ENCODE measurements at regions of chr21 and their contacts with region 1.

Region 1: GRCh38 chr21:39313571-39314142 is at the start of gene BRWD1:
- DNase-seq: peak; percentile 75
- H3K4me3 Mint-ChIP-seq: peak within 1 kb of the TSS; percentile 93
- H3K27ac Mint-ChIP-seq: peak within 1 kb of the TSS; percentile 97
- H3K4me1 Mint-ChIP-seq: peaks cover 42% of the 10 kb centered on the region
- H3K27me3 Mint-ChIP-seq: no peaks in the 10 kb centered on the region
- total RNA-seq, gene BRWD1: 23.0 to 24.5 TPM

Region 2: DNA sequence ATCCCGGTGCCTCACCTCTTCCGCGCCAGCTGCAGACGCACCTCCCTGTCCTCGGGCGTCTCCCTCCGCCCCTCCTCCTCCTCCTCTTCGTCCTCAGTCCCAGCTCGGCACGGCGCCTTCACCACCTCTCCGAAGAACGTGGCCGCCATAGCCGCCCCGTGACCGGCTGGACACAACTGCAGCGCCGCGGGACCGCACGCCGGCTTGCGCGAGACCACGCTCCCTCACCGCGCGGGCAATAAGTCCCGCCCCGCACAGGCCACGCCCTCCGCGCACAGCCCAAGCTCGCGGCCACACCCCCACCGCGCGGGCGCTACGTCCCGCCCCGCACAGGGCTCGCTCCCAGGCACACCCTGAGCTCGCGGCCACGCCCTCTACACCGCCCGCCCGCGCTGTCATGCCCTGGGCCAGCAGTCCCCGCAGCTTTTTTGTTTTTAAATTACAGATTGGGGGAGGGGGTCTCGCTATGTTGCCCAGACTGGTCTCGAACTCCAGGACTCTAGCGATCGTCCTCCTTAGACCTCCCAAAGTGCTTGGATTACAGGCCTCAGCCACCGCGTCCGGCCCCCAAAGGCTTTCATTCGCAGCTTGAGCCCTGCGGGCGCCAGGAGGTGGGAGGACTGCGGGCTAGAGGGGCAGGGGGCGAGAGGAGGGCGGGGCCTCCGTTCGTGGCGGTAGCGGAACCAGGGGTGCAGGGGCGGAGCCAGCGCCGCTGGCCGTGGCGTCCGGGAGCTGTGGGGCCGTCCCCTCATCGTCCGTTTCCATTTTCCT is 130.2 kb before region 1 on chr21 and contains the start of gene PSMG1:
- CTCF ChIA-PET with region 1: no interaction called
- intact Hi-C with region 1: loop called (anchors 1 kb)
- DNase-seq: peak; percentile 94
- H3K4me3 Mint-ChIP-seq: peak within 1 kb of the TSS; percentile 92
- H3K27ac Mint-ChIP-seq: peak within 1 kb of the TSS; percentile 90
- H3K4me1 Mint-ChIP-seq: peaks cover 62% of the 10 kb centered on the region
- H3K27me3 Mint-ChIP-seq: no peaks in the 10 kb centered on the region
- total RNA-seq, gene PSMG1: 70.8 to 70.9 TPM

Region 3: GRCh38 chr21:39232861-39233291 is 80.8 kb before region 1 on chr21:
- CTCF ChIA-PET with region 1: no interaction called
- intact Hi-C with region 1: no loop called
- DNase-seq: no peak
- H3K4me3 Mint-ChIP-seq: no peak overlapping the region
- H3K27ac Mint-ChIP-seq: no peak overlapping the region
- H3K4me1 Mint-ChIP-seq: peaks cover 10% of the 10 kb centered on the region
- H3K27me3 Mint-ChIP-seq: no peaks in the 10 kb centered on the region

Region 4: DNA sequence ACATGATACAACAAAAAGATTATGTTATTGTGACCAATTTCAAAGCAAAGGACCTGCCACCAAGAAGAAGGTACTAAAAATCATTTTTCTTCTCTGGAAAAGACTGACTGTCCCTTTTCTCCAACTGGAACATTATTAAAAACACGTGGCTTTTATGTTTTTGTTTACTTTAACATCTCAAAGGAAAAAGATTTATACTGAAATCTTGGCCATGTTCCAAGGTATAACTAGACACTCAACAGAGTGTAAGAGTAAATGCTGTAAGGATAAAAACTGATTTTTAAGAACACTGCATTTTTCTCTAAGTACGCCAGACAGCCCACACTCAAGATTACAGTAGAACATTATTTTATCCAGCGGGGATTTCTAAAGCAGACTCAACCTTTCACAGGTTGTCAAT is 62.3 kb before region 1 on chr21:
- CTCF ChIA-PET with region 1: no interaction called
- intact Hi-C with region 1: no loop called
- DNase-seq: no peak
- H3K4me3 Mint-ChIP-seq: no peak overlapping the region
- H3K27ac Mint-ChIP-seq: no peak overlapping the region
- H3K4me1 Mint-ChIP-seq: no peaks in the 10 kb centered on the region
- H3K27me3 Mint-ChIP-seq: no peaks in the 10 kb centered on the region

Region 5: DNA sequence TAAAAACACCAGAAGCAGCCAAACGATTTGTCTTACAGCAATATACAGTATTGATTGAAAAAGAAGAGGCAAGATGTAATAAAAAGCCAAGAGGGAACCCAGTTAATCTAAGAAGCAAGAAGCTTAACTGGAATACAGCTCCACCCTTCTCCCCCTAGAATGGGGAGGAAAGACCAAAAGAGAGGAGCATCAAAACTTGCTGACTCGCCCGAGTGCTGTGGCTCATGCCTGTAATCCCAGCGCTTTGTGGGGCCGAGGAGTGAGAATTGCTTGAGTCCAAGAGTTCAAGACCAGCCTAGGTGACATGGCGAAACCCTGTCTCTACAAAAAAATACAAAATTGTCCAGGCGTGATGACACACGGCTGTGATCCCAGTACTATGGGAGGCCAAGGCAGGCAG is 32.5 kb before region 1 on chr21:
- CTCF ChIA-PET with region 1: no interaction called
- intact Hi-C with region 1: no loop called
- DNase-seq: no peak
- H3K4me3 Mint-ChIP-seq: no peak overlapping the region
- H3K27ac Mint-ChIP-seq: no peak overlapping the region
- H3K4me1 Mint-ChIP-seq: no peaks in the 10 kb centered on the region
- H3K27me3 Mint-ChIP-seq: no peaks in the 10 kb centered on the region

Region 6: DNA sequence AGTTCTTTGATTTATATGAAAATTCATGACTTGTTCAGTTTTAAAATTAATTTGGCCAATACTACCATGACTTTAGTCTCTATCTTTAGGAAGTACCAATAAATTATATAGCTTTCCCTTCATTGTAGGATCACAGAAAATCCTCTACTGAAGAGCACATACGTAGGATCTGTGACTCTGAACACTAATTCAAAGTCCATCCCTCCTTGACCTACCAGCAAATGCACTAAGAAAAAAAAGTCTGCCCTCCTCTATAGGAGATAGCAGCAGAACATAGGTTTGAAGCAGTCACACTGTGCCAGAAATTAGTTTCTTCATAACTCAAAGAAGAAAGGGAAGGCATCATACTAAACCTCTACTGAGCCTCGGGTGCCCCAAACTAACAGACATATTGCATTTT is 16.8 kb before region 1 on chr21:
- CTCF ChIA-PET with region 1: no interaction called
- intact Hi-C with region 1: loop called (anchors 2 kb)
- DNase-seq: no peak
- H3K4me3 Mint-ChIP-seq: no peak overlapping the region
- H3K27ac Mint-ChIP-seq: no peak overlapping the region
- H3K4me1 Mint-ChIP-seq: peaks cover 33% of the 10 kb centered on the region
- H3K27me3 Mint-ChIP-seq: no peaks in the 10 kb centered on the region

Measured in activated naive CD4-positive, alpha-beta T cell treated with anti-CD3 and anti-CD28 coated beads for 36 hours (primary cell).